ENCODE measurements at regions of chrX and their contacts with region 1.

Region 1: GRCh38 chrX:78595901-78596502 is 63.1 kb downstream of the RTL3 start:
- DNase-seq: no peak
- H3K4me3 ChIP-seq: no peak overlapping the region
- H3K27ac ChIP-seq: no peak overlapping the region
- H3K4me1 ChIP-seq: no peaks in the 10 kb centered on the region
- H3K27me3 ChIP-seq: no peaks in the 10 kb centered on the region
- CTCF ChIP-seq: peak in 1 of 2 donors; percentile 1

Region 2: DNA sequence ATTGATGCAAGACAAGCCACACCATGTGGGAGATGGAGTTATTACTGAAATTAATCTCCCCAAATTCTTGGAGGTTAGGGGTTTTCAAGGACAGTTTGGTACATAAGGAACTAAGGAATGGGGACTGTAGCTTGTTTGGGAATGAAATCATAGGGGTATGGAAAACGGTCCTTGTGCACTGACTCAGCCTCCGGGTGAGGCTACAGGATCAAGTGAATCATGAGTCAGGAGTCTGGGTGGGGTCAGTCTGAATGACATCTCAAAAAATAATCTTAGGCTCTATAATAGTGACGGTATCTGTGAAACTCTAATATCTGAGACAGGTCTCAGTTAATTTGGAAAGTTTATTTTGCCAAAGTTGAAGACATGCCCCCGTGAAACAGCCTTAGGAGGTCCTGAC is 140.1 kb before region 1 on chrX:
- CTCF ChIA-PET with region 1: no interaction called
- dilution Hi-C with region 1: no loop called
- in situ Hi-C with region 1: no loop called
- intact Hi-C with region 1: no loop called
- DNase-seq: peak; percentile 35
- H3K4me3 ChIP-seq: no peak overlapping the region
- H3K27ac ChIP-seq: no peak overlapping the region
- H3K4me1 ChIP-seq: no peaks in the 10 kb centered on the region
- H3K27me3 ChIP-seq: no peaks in the 10 kb centered on the region
- CTCF ChIP-seq: no peak

Region 3: DNA sequence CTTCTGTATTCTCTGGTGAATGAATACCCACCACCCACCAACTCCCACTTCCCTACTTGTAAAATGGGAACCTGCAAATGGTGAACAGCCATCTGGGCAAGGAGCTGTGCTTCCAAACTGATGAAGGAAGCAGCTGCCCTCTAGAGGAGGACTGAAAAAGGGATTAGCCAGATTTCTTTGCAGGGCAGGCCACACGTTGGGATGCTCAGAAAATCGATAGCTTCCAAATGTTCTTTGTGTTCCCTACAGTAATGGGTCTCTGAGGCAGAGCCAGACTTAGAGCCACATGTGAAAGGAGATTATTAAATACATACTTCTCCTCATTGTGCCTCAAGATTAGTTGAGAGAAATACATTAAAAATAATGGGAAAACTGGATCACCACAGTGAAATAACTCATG is 112.3 kb after region 1 on chrX:
- CTCF ChIA-PET with region 1: no interaction called
- dilution Hi-C with region 1: no loop called
- in situ Hi-C with region 1: no loop called
- intact Hi-C with region 1: loop called (anchors 2 kb)
- DNase-seq: peak; percentile 10
- H3K4me3 ChIP-seq: no peak overlapping the region
- H3K27ac ChIP-seq: no peak overlapping the region
- H3K4me1 ChIP-seq: no peaks in the 10 kb centered on the region
- H3K27me3 ChIP-seq: no peaks in the 10 kb centered on the region
- CTCF ChIP-seq: peak; percentile 25 to 59

Region 4: GRCh38 chrX:78945186-78945912 is 349.3 kb after region 1 on chrX and contains the start of gene P2RY10:
- CTCF ChIA-PET with region 1: no interaction called
- dilution Hi-C with region 1: no loop called
- in situ Hi-C with region 1: no loop called
- intact Hi-C with region 1: no loop called
- DNase-seq: no peak
- H3K4me3 ChIP-seq: no peak within 1 kb of the TSS
- H3K27ac ChIP-seq: no peak within 1 kb of the TSS
- H3K4me1 ChIP-seq: no peaks in the 10 kb centered on the region
- H3K27me3 ChIP-seq: no peaks in the 10 kb centered on the region
- CTCF ChIP-seq: no peak
- total RNA-seq, gene P2RY10: not detected

Measured in mammary epithelial cell (primary cell).